ENCODE measurements at regions of chr1 and their contacts with region 1.

Region 1: GRCh38 chr1:74673351-74674111 is at the start of gene ERICH3:
- DNase-seq: peak; percentile 39
- ATAC-seq: peak; percentile 82
- H3K4me3 Mint-ChIP-seq: peak within 1 kb of the TSS; percentile 65
- H3K27ac Mint-ChIP-seq: no peak within 1 kb of the TSS
- H3K4me1 Mint-ChIP-seq: peaks cover 21% of the 10 kb centered on the region
- H3K27me3 Mint-ChIP-seq: peaks cover 32% of the 10 kb centered on the region
- CTCF ChIP-seq: no peak
- total RNA-seq, gene ERICH3: 0.07 TPM in 1 of 3 replicates, not detected in the others

Region 2: DNA sequence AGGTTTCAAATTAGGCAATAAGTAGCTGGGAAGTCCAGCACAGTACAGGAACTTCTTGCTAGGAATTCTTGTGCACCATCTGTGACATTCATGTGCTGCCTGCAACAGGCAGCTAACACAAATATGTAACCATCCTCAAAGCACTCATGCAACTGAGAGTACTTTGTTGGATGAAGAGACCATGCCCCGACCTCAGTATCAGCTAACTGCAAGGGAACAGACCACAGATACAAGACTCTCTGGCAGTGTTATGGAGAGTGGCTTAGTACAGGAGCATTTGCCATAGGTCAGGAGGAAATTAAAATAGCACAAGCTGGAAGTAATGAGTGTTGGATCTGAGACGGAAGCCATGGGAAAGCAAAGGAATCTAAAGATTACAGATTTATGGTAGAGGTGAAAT is 284.7 kb before region 1 on chr1:
- CTCF ChIA-PET with region 1: no interaction called
- POLR2A ChIA-PET with region 1: no interaction called
- DNase-seq: no peak
- ATAC-seq: no peak
- H3K4me3 Mint-ChIP-seq: no peak overlapping the region
- H3K27ac Mint-ChIP-seq: no peak overlapping the region
- H3K4me1 Mint-ChIP-seq: peaks cover 32% of the 10 kb centered on the region
- H3K27me3 Mint-ChIP-seq: no peaks in the 10 kb centered on the region
- CTCF ChIP-seq: no peak

Region 3: GRCh38 chr1:74733604-74734484 is 60.3 kb after region 1 on chr1:
- CTCF ChIA-PET with region 1: interaction called, 11 read pairs
- POLR2A ChIA-PET with region 1: no interaction called
- DNase-seq: no peak
- ATAC-seq: peak; percentile 54
- H3K4me3 Mint-ChIP-seq: peak overlapping the region; percentile 92
- H3K27ac Mint-ChIP-seq: peak overlapping the region; percentile 100
- H3K4me1 Mint-ChIP-seq: peaks cover 34% of the 10 kb centered on the region
- H3K27me3 Mint-ChIP-seq: no peaks in the 10 kb centered on the region
- CTCF ChIP-seq: no peak; the same call in 1 of the 2 replicates

Region 4: DNA sequence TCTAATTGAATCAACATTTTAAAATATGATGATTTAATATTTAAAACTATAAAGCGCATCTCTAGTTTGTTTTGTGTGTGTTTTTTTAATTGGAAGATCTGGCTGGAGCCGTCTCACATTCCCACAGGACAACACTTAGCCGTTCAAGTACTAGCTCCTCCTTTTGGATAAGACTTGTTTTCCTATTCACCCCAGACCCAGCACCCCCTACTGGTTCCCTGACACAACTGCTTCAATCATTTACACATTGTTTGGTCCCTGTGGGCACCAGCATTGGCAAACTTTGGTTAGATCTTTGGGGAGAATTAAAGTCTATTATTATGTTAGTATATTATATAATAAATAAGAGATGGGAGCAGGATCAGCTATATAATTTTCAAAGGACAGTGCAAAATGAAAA is 94.0 kb after region 1 on chr1:
- CTCF ChIA-PET with region 1: interaction called, 10 read pairs
- POLR2A ChIA-PET with region 1: no interaction called
- DNase-seq: peak; percentile 54
- ATAC-seq: peak; percentile 95
- H3K4me3 Mint-ChIP-seq: no peak overlapping the region
- H3K27ac Mint-ChIP-seq: no peak overlapping the region
- H3K4me1 Mint-ChIP-seq: no peaks in the 10 kb centered on the region
- H3K27me3 Mint-ChIP-seq: no peaks in the 10 kb centered on the region
- CTCF ChIP-seq: peak; percentile 42; the same call in 1 of the 2 replicates